ENCODE measurements at regions of chr13 and their contacts with region 1.

Region 1: GRCh38 chr13:95239283-95239682 is 62.0 kb downstream of the ABCC4 start:
- DNase-seq: no peak
- ATAC-seq: peak; percentile 57
- H3K4me3 Mint-ChIP-seq: no peak overlapping the region
- H3K27ac Mint-ChIP-seq: peak overlapping the region; percentile 63
- H3K4me1 Mint-ChIP-seq: peaks cover 40% of the 10 kb centered on the region
- H3K27me3 Mint-ChIP-seq: no peaks in the 10 kb centered on the region
- CTCF ChIP-seq: no peak

Region 2: GRCh38 chr13:95226932-95227695 is 12.2 kb before region 1 on chr13:
- CTCF ChIA-PET with region 1: no interaction called
- POLR2A ChIA-PET with region 1: interaction called, 5 read pairs
- intact Hi-C with region 1: loop called (anchors 1 kb)
- DNase-seq: no peak
- ATAC-seq: peak; percentile 78
- H3K4me3 Mint-ChIP-seq: peak overlapping the region; percentile 50
- H3K27ac Mint-ChIP-seq: peak overlapping the region; percentile 65
- H3K4me1 Mint-ChIP-seq: peaks cover 23% of the 10 kb centered on the region
- H3K27me3 Mint-ChIP-seq: no peaks in the 10 kb centered on the region
- CTCF ChIP-seq: no peak

Region 3: GRCh38 chr13:95284436-95284835 is 45.2 kb after region 1 on chr13:
- CTCF ChIA-PET with region 1: no interaction called
- POLR2A ChIA-PET with region 1: no interaction called
- intact Hi-C with region 1: loop called (anchors 5 kb)
- DNase-seq: no peak
- ATAC-seq: no peak
- H3K4me3 Mint-ChIP-seq: no peak overlapping the region
- H3K27ac Mint-ChIP-seq: no peak overlapping the region
- H3K4me1 Mint-ChIP-seq: peaks cover 45% of the 10 kb centered on the region
- H3K27me3 Mint-ChIP-seq: no peaks in the 10 kb centered on the region
- CTCF ChIP-seq: no peak